ENCODE measurements at regions of chr12 and their contacts with region 1.

Region 1: GRCh38 chr12:6697584-6698351 is 2.8 kb downstream of the PIANP start:
- DNase-seq: peak; percentile 45
- ATAC-seq: peak; percentile 93
- H3K4me3 ChIP-seq: no peak overlapping the region
- H3K27ac ChIP-seq: no peak overlapping the region
- H3K4me1 ChIP-seq: peaks cover 0 to 6% of the 10 kb centered on the region in 2 experiments; a peak in 1 of 4 replicates
- H3K27me3 ChIP-seq: no peaks in the 10 kb centered on the region
- CTCF ChIP-seq: peak; percentile 71 to 78 (median 74)
- POLR2A ChIP-seq: no peak
- RAD21 ChIP-seq: peak; percentile 88

Region 2: DNA sequence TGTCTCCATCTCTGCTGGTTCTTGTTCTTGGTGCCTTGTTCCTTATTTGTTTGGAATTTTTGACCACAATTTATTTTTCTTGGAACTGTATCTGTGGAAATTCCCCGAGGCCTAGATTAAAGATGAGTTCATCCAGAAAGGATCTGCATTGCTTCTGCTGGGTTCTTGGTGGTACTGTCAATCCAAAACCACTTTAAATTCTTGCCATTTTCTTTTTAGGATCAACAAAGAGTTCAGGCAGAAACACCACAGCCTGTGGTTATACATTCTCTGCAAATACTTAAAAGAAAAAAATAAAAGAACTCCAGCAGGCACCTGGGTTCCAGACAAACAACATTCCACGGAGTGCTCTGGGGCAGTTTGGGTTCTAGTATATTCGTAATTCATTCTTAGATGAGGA is 221.3 kb before region 1 on chr12:
- CTCF ChIA-PET with region 1: no interaction called
- POLR2A ChIA-PET with region 1: no interaction called
- RAD21 ChIA-PET with region 1: no interaction called
- intact Hi-C with region 1: no loop called
- DNase-seq: no peak
- ATAC-seq: no peak
- H3K4me3 ChIP-seq: no peak overlapping the region
- H3K27ac ChIP-seq: no peak overlapping the region
- H3K4me1 ChIP-seq: peaks cover 0 to 7% of the 10 kb centered on the region in 2 experiments; a peak in 3 of 4 replicates
- H3K27me3 ChIP-seq: no peaks in the 10 kb centered on the region
- CTCF ChIP-seq: no peak
- POLR2A ChIP-seq: no peak
- RAD21 ChIP-seq: no peak

Region 3: DNA sequence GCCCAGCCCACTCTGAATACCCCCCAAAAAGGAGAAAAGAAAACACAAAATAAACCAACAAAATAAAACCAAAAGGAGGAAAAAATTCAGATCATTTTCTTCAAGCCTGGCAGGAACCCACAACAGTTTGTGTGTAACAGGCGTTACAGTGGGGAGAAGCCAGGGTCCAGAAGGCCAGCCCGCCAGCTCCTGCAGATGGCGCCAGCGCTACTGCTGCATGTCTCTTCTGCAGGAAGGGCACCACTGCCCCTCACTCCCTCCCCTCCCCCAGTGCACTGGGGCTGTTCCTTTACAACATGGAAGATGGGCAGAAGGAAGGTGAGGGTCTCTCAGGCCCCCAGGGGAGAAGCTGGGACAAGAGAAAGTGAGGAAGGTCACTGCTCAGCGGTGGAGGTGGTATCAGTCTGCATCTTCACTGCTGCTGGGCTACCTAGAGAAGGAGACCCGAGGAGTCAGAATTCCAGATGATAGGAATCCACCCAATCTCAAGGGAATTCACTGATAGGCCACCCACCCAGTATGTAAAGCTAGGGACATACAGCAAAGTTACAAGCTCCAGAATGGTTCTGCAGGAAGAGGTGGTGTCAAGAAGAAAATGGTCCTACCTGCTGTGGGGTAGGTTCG is 127.4 kb before region 1 on chr12:
- CTCF ChIA-PET with region 1: no interaction called
- POLR2A ChIA-PET with region 1: no interaction called
- RAD21 ChIA-PET with region 1: no interaction called
- intact Hi-C with region 1: loop called (anchors 2 kb)
- DNase-seq: peak; percentile 37
- ATAC-seq: peak; percentile 49
- H3K4me3 ChIP-seq: no peak overlapping the region
- H3K27ac ChIP-seq: 0 out of 2 replicates have a peak overlapping the region, but pooled peaks have one; percentile 81
- H3K4me1 ChIP-seq: peaks cover 6 to 15% of the 10 kb centered on the region in 2 experiments; a peak in 3 of 4 replicates
- H3K27me3 ChIP-seq: no peaks in the 10 kb centered on the region
- CTCF ChIP-seq: peak; percentile 36 to 86 (median 82); a peak in 5 of 6 replicates
- POLR2A ChIP-seq: no peak
- RAD21 ChIP-seq: peak; percentile 71

Region 4: DNA sequence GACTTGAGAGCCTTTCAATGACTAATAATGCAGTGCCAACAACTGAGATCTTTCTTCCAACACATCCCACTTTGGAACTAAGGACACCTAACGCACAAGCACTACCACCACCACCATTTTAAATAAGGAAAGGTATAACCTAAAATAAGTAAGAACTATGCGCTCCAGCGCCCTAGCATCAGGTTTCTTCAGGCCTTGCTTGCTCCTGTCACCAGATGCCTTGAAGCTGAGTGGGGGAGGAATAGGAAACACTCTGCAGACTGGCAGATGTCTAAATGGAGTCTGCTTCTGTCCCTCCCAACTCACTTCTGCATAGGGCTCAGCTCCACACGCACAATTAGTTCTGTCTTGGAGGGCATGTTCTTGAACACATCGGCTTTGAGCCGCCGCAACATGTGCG is 105.7 kb before region 1 on chr12:
- CTCF ChIA-PET with region 1: no interaction called
- POLR2A ChIA-PET with region 1: no interaction called
- RAD21 ChIA-PET with region 1: no interaction called
- intact Hi-C with region 1: no loop called
- DNase-seq: no peak
- ATAC-seq: no peak
- H3K4me3 ChIP-seq: no peak overlapping the region
- H3K27ac ChIP-seq: no peak overlapping the region
- H3K4me1 ChIP-seq: no peaks in the 10 kb centered on the region
- H3K27me3 ChIP-seq: no peaks in the 10 kb centered on the region
- CTCF ChIP-seq: no peak
- POLR2A ChIP-seq: no peak
- RAD21 ChIP-seq: no peak

Region 5: GRCh38 chr12:7872566-7873319 is 1175.0 kb after region 1 on chr12 and contains the start of gene SLC2A14:
- CTCF ChIA-PET with region 1: no interaction called
- POLR2A ChIA-PET with region 1: no interaction called
- RAD21 ChIA-PET with region 1: no interaction called
- intact Hi-C with region 1: no loop called
- DNase-seq: no peak
- ATAC-seq: no peak
- H3K4me3 ChIP-seq: no peak within 1 kb of the TSS
- H3K27ac ChIP-seq: no peak within 1 kb of the TSS
- H3K4me1 ChIP-seq: no peaks in the 10 kb centered on the region
- H3K27me3 ChIP-seq: no peaks in the 10 kb centered on the region
- CTCF ChIP-seq: no peak
- POLR2A ChIP-seq: no peak
- RAD21 ChIP-seq: no peak
- total RNA-seq, gene SLC2A14: not detected